ENCODE measurements at regions of chr18 and their contacts with region 1.

Region 1: DNA sequence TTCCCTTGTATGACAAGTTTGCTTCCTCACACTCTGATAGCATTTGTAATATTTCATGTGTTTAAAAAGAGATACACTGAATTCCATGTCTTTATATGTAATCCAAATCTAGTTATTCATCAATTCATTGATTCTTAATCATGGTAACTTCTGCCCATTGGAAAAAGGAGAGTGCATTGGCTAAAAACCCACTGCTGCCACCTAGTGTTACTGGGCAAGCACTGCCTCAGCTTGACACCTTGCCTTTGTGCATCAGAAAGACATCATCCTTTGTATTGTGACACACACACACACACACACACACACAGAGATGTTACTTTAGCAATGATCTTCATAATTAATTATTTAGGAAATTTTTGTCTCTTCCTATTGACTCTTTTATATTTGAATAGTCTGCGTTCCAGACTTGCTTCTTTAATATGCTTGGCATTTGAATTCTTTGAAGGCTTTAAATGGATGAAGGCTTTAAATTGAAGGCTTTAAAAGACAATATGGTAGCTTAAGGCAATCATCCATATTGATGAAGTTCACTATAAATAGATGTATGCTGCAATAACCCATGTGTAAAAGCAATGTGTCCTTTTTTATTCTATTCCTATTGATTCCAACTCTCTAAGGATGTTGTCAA is 414.2 kb upstream of the CHST9 start:
- DNase-seq: peak; percentile 53
- H3K4me3 ChIP-seq: no peak overlapping the region
- H3K27ac ChIP-seq: no peak overlapping the region
- H3K4me1 ChIP-seq: no peaks in the 10 kb centered on the region
- CTCF ChIP-seq: peak; percentile 96

Region 2: DNA sequence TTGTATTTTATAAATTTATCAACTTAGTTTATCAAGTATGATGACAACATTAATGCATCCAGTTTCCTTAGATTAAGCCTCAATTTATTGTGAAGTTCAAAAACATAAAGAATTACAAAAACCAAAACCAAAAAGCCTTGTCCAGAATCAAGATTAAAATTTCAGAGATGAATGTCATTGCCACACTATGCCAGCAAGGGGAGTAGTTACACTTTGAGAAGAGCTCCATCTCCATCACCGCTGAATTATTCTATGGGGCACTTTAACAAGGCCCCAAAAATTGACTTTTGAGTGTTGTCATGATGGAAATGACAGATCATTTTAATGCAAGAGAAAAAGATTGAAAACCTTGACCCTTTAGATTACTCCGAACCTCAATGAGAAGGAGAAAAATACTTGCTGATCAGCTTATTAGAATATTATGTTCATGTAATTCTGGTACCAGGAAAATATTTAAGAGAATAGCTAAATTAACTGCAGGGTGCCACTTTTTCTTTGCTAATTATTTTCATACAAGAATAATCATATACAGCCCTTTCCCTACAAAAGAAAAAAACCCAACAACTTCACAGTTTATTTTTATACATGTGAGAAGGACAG is 581.3 kb before region 1 on chr18:
- CTCF ChIA-PET with region 1: no interaction called
- POLR2A ChIA-PET with region 1: no interaction called
- intact Hi-C with region 1: loop called (anchors 5 kb)
- DNase-seq: peak; percentile 13
- H3K4me3 ChIP-seq: no peak overlapping the region
- H3K27ac ChIP-seq: no peak overlapping the region
- H3K4me1 ChIP-seq: no peaks in the 10 kb centered on the region
- CTCF ChIP-seq: peak; percentile 82

Region 3: DNA sequence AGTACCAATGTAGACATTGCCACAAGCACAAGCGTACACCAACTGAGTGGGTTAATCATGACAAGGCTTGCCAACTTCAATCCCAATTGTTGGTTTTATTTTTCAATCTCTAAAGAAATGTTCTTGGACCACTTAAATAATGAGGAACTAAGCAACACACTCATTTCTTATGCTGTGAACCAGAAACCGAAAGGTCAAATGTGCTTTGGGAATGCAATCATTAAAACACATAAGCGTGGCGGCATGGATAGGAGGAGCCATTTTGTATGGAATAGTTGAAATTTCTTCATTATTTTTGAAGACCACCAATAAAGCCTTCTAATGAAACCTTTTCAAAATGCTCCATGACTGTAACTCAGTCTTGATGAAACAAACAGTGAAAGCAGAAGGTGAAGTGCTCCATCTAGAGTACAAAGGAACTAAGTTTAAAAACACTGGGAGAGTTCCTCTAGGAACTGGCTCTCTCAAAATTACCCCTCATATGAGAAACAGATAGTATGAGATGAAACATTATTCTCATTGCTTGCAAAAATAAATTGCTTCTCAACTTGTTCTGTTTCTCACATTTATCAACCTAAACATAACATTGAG is 301.0 kb before region 1 on chr18:
- CTCF ChIA-PET with region 1: no interaction called
- POLR2A ChIA-PET with region 1: no interaction called
- intact Hi-C with region 1: no loop called
- DNase-seq: no peak
- H3K4me3 ChIP-seq: no peak overlapping the region
- H3K27ac ChIP-seq: no peak overlapping the region
- H3K4me1 ChIP-seq: no peaks in the 10 kb centered on the region
- CTCF ChIP-seq: peak; percentile 44; the same call in 1 of the 2 replicates

Region 4: GRCh38 chr18:27558388-27559155 is 40.7 kb before region 1 on chr18:
- CTCF ChIA-PET with region 1: no interaction called
- POLR2A ChIA-PET with region 1: no interaction called
- intact Hi-C with region 1: no loop called
- DNase-seq: no peak
- H3K4me3 ChIP-seq: no peak overlapping the region
- H3K27ac ChIP-seq: no peak overlapping the region
- H3K4me1 ChIP-seq: no peaks in the 10 kb centered on the region
- CTCF ChIP-seq: no peak

Region 5: DNA sequence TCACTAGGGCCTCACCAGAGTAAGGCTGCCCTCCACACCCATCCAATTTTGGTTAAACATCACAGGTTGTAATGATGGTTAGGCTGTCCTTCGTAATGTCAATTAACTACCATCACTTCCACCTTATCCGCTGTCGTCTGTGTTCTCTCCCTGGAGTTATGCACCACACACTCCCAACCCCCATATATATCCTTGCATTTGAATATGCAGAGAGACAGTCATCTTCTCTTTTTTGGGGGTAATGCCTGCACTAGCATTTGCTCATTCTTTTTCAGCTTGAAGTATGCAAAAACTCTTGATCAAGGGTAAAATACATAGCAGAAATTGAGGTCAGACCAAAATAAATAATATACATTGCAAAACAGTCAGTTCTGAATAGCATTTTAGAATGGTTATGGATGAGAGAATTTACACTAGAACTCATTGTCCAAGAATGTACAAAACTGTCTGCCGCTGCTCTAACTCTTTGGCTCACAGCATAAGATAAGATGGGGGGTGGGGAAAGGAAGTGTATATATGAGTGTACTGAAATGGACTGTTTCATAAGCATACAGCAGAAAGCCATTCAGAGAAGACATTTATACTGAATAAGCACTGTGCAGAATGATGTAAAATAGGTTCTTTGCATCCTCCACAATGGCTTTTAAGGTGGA is 16.4 kb before region 1 on chr18:
- CTCF ChIA-PET with region 1: no interaction called
- POLR2A ChIA-PET with region 1: interaction called, 4 read pairs
- intact Hi-C with region 1: loop called (anchors 1 kb)
- DNase-seq: no peak
- H3K4me3 ChIP-seq: no peak overlapping the region
- H3K27ac ChIP-seq: no peak overlapping the region
- H3K4me1 ChIP-seq: no peaks in the 10 kb centered on the region
- CTCF ChIP-seq: no peak